ENCODE measurements at regions of chr14 and their contacts with region 1.

Region 1: GRCh38 chr14:102096214-102097114 is 9.6 kb upstream of the HSP90AA1 start:
- DNase-seq: peak; percentile 35
- H3K4me3 Mint-ChIP-seq: no peak overlapping the region
- H3K27ac Mint-ChIP-seq: no peak overlapping the region
- H3K4me1 Mint-ChIP-seq: peaks cover 13% of the 10 kb centered on the region
- H3K27me3 Mint-ChIP-seq: no peaks in the 10 kb centered on the region

Region 2: GRCh38 chr14:102063091-102063802 is 33.2 kb before region 1 on chr14:
- intact Hi-C with region 1: loop called (anchors 1 kb)
- DNase-seq: peak; percentile 59
- H3K4me3 Mint-ChIP-seq: no peak overlapping the region
- H3K27ac Mint-ChIP-seq: no peak overlapping the region
- H3K4me1 Mint-ChIP-seq: peaks cover 4% of the 10 kb centered on the region
- H3K27me3 Mint-ChIP-seq: no peaks in the 10 kb centered on the region